ENCODE measurements at regions of chr2 and their contacts with region 1.

Region 1: GRCh38 chr2:1841461-1841860 is 97.1 kb upstream of the PXDN start:
- DNase-seq: no peak
- ATAC-seq: no peak
- H3K4me3 ChIP-seq: no peak overlapping the region
- H3K4me3 Mint-ChIP-seq: no peak overlapping the region
- H3K27ac ChIP-seq: no peak overlapping the region
- H3K27ac Mint-ChIP-seq: no peak overlapping the region
- H3K4me1 ChIP-seq: no peaks in the 10 kb centered on the region
- H3K4me1 Mint-ChIP-seq: no peaks in the 10 kb centered on the region
- H3K27me3 ChIP-seq: peaks cover 0 to 5% of the 10 kb centered on the region in 2 experiments
- H3K27me3 Mint-ChIP-seq: peaks cover 4 to 5% of the 10 kb centered on the region in 2 donors

Region 2: GRCh38 chr2:1750933-1751766 is 90.3 kb before region 1 on chr2:
- CTCF ChIA-PET with region 1: no interaction called
- POLR2A ChIA-PET with region 1: no interaction called
- DNase-seq: peak in 17 of 35 experiments; percentile 8 to 45 (median 20)
- ATAC-seq: peak; percentile 56 to 68 (median 64)
- H3K4me3 ChIP-seq: no peak overlapping the region
- H3K4me3 Mint-ChIP-seq: no peak overlapping the region
- H3K27ac ChIP-seq: no peak overlapping the region
- H3K27ac Mint-ChIP-seq: no peak overlapping the region
- H3K4me1 ChIP-seq: no peaks in the 10 kb centered on the region
- H3K4me1 Mint-ChIP-seq: peaks cover 6 to 8% (median 6%) of the 10 kb centered on the region in 3 donors
- H3K27me3 ChIP-seq: peaks cover 0 to 39% of the 10 kb centered on the region in 2 experiments
- H3K27me3 Mint-ChIP-seq: peaks cover 26 to 30% of the 10 kb centered on the region in 2 donors

Region 3: DNA sequence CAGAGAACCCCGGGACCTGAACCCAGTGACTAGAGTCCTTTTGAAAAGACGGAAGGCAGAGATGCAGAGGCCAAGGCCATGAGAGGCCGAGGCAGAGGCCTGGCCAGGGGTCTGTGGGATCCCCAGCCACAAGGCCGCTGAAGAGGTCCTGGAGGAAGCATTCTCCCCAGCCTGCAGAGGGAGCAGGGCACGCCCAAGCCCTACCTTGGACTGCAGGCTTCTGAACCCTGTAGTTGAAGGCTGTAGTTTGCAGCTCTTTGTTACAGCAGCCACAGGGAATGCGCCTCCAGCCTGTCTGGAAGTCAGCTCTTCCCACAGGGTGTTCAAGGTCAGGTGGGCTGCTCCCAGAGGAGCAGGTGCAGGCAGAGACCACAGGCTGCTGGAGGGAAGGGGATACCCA is 75.0 kb before region 1 on chr2:
- CTCF ChIA-PET with region 1: no interaction called
- POLR2A ChIA-PET with region 1: no interaction called
- DNase-seq: no peak
- ATAC-seq: no peak
- H3K4me3 ChIP-seq: no peak overlapping the region
- H3K4me3 Mint-ChIP-seq: no peak overlapping the region
- H3K27ac ChIP-seq: no peak overlapping the region
- H3K27ac Mint-ChIP-seq: no peak overlapping the region
- H3K4me1 ChIP-seq: no peaks in the 10 kb centered on the region
- H3K4me1 Mint-ChIP-seq: peaks cover 0 to 3% (median 0%) of the 10 kb centered on the region in 3 donors
- H3K27me3 ChIP-seq: peaks cover 0 to 21% of the 10 kb centered on the region in 2 experiments
- H3K27me3 Mint-ChIP-seq: peaks cover 7 to 13% of the 10 kb centered on the region in 2 donors

Region 4: DNA sequence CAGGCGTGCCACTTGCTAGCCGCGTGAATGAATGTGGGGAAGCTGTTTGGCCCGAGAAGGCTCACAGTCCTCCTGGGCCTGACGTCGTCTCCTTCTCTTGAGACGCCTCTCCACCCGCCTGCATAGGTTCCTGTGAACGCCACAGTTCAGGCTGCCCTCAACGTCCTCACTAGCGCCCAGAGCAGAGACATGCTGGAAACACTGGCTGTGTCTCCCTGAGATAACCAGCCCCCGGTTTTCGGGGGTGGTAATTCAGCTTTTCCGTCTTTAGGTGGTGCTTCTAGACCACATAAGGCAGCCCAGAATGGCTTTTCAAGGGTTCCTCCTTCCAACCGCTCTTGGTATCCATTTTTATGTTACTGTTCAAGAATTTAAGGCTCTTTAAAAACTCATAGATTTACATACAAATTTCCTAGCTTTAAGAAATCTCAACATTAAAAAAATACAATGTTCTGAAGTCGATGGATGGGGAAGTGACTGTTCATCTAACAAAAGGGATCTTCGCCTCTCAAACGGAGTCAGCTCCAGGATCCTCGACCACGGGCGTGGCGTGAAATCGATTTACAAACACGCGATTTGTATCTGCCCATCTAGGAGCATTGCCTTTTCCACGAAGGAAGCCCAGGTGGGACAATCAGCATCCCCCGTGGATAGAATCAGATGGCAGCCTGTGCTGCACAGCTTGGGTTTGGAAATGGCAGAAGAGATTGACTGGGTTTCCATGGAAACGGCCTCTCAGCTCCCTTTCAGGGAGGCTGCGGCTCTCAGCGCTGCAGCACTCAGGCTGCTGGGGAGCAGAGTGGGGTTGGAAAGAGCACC is 13.5 kb after region 1 on chr2:
- CTCF ChIA-PET with region 1: no interaction called
- POLR2A ChIA-PET with region 1: no interaction called
- DNase-seq: peak in 1 of 35 experiments; percentile 2
- ATAC-seq: peak in 2 of 4 experiments; percentile 19 to 49
- H3K4me3 ChIP-seq: no peak overlapping the region
- H3K4me3 Mint-ChIP-seq: no peak overlapping the region
- H3K27ac ChIP-seq: no peak overlapping the region
- H3K27ac Mint-ChIP-seq: no peak overlapping the region
- H3K4me1 ChIP-seq: no peaks in the 10 kb centered on the region
- H3K4me1 Mint-ChIP-seq: peaks cover 0 to 5% (median 0%) of the 10 kb centered on the region in 3 donors
- H3K27me3 ChIP-seq: peaks cover 2 to 19% of the 10 kb centered on the region in 2 experiments
- H3K27me3 Mint-ChIP-seq: peaks cover 36 to 40% of the 10 kb centered on the region in 2 donors

Region 5: DNA sequence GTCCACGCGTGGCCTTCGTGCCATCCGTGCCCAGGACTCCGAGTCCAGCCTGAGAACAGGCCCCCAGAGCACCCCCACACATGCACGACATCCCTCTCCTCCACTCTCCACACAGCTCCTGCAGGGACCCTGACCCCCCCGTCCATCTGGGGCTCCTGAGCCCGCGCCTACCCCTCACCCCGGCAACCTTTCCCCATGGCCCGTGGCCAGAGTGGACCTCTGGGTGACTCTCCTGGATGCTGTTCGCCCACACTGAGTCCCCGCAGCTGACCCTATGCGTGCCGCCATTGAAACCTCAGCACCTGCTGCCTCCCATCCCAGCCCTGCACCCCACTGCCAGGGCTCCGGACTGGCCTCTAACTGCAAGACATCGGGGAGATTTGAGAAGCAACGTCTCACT is 34.9 kb after region 1 on chr2:
- CTCF ChIA-PET with region 1: no interaction called
- POLR2A ChIA-PET with region 1: interaction called in 1 of 2 experiments, 11 read pairs
- DNase-seq: no peak
- ATAC-seq: no peak
- H3K4me3 ChIP-seq: no peak overlapping the region
- H3K4me3 Mint-ChIP-seq: no peak overlapping the region
- H3K27ac ChIP-seq: no peak overlapping the region
- H3K27ac Mint-ChIP-seq: no peak overlapping the region
- H3K4me1 ChIP-seq: no peaks in the 10 kb centered on the region
- H3K4me1 Mint-ChIP-seq: no peaks in the 10 kb centered on the region
- H3K27me3 ChIP-seq: peaks cover 0 to 12% of the 10 kb centered on the region in 2 experiments
- H3K27me3 Mint-ChIP-seq: peaks cover 20 to 23% of the 10 kb centered on the region in 2 donors

Region 6: GRCh38 chr2:2134042-2134441 is 292.6 kb after region 1 on chr2:
- CTCF ChIA-PET with region 1: no interaction called
- POLR2A ChIA-PET with region 1: no interaction called
- DNase-seq: no peak
- ATAC-seq: no peak
- H3K4me3 ChIP-seq: no peak overlapping the region
- H3K4me3 Mint-ChIP-seq: no peak overlapping the region
- H3K27ac ChIP-seq: no peak overlapping the region
- H3K27ac Mint-ChIP-seq: no peak overlapping the region
- H3K4me1 ChIP-seq: no peaks in the 10 kb centered on the region
- H3K4me1 Mint-ChIP-seq: no peaks in the 10 kb centered on the region
- H3K27me3 ChIP-seq: peaks cover 0 to 2% of the 10 kb centered on the region in 2 experiments
- H3K27me3 Mint-ChIP-seq: peaks cover 0 to 15% of the 10 kb centered on the region in 2 donors

Measured in T-cell (primary cell).